GM13976 (cell line): ENCODE measurements at regions of chr6 and their contacts with region 1.

Region 1: GRCh38 chr6:46221222-46221793 is 50.5 kb upstream of the ENPP5 start:
- DNase-seq: peak; percentile 42
- CTCF ChIP-seq: peak; percentile 69

Region 2: GRCh38 chr6:45930420-45931040 is 290.8 kb before region 1 on chr6:
- in situ Hi-C with region 1: loop called (anchors 25 kb)
- DNase-seq: peak; percentile 69
- CTCF ChIP-seq: peak; percentile 99

Region 3: DNA sequence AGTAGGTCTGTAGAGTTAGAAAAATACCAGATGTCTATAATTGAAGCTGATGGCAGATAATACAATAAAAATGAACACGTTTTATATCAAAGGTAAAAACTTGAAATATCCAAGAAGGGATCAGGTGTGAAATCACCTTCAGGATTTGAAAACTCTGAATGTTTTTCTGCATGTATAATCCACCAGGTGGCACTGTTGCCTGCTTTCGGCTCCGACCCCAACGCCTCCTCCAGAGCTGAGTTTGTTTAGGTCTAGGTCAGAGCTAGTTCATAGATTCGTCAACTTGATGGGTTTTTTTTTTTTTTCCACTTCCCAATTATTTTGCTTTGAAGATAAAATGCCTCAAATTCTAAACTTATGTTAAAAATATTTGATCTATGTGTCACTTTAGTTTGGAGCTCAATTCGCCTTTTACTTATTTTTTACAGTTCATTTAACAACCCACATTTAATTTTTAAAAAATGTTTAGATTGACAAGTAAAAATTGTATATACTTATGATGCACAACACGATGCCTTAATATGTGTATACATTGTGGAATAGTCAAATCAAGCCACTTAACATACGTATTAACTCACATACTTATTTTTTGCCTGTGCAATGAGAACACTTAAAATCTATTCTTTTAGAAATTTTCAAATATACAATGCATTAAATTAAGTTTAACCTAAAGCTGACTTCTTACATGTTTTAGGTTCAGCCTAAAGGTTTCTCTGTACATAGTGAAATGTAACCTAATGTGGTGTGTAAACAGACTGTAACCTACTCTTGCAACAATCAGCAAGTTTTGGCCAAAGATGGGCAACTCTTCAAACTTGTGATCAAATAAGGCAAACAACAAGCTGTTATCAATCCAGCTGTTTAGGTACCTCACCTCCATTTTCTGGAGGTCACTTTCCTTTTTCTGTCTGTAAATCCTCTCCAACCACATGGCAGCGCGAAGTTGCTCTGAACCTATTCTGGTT is 130.9 kb before region 1 on chr6:
- in situ Hi-C with region 1: loop called (anchors 5 kb)
- DNase-seq: peak; percentile 61
- CTCF ChIP-seq: peak; percentile 58

Region 4: GRCh38 chr6:46407776-46408530 is 186.6 kb after region 1 on chr6:
- in situ Hi-C with region 1: loop called (anchors 10 kb)
- DNase-seq: no peak
- CTCF ChIP-seq: no peak

Region 5: DNA sequence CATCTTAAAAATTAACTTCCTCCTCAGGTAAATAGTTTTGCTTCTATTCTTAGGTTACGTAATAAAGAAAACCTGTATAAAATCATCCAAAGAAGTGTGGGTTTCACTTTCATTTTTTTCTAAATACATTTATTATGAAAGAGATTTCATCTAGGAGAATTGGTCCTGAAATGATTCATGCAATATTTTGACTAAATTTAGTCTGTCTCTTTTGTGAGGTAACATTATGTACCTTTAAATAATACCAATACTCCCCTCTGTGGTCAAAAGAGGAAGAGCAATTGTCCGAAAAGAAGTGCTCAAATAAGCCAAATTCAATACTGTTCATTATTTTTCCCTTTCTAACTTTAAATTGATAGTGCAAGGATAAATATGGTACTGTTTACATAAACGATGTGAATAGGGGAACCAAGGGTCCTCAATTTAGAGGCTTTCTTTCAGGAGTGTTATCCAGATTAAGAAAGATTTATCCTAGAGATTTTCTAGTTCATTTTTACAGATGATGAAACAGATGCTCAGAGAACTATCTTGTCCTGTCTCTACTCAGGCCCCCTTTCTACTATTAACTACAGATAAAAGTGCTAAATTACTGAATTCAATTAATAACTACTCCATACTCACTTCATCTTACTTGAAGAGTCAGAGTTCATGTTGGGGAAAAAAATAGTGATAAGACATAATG is 405.1 kb after region 1 on chr6:
- in situ Hi-C with region 1: loop called (anchors 25 kb)
- DNase-seq: peak; percentile 27
- CTCF ChIP-seq: peak; percentile 40